Activated CD4-positive, alpha-beta memory T cell treated with anti-CD3 and anti-CD28 coated beads for 36 hours (primary cell): ENCODE measurements at regions of chr1 and their contacts with region 1.

Region 1: DNA sequence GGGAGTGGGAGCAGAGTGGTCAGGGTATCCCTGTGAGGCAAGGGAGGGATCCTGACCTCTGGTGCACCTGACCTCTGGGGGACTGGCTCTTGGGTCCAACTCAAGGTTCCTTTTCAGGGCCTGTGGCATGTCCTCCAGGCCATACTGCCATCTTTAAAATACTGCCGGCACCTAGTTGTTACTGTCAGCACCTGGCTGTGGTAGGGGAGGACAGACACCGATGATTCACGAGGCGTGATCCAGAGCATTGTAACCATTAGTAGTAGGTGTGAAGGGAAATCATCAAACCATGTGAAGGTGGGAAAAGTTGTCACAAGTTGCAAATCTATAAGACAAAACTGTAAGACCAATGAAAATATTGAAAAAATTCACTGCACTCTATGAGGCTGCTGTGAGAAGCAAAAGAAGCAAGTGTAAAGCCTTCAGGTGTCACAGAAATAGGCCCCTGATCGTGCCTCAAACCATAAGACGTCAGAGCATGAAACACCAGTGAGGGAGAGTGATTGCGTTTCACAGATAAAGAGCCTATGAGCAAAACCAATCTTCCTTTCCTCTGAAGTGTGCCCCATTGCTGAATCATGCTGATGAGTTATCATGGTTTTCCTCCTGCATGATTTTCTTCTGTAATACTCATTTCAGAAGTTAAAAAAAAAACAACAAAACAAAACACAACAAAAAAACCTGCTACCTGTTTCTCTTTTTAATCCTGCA is 55.3 kb downstream of the CDC7 start:
- DNase-seq: peak; percentile 79
- H3K4me3 Mint-ChIP-seq: peak overlapping the region; percentile 51
- H3K27ac Mint-ChIP-seq: peak overlapping the region; percentile 91
- H3K4me1 Mint-ChIP-seq: peaks cover 87% of the 10 kb centered on the region
- H3K27me3 Mint-ChIP-seq: no peaks in the 10 kb centered on the region

Region 2: GRCh38 chr1:91500756-91501522 is 55.0 kb before region 1 on chr1 and contains the start of gene CDC7:
- CTCF ChIA-PET with region 1: interaction called, 5 read pairs
- POLR2A ChIA-PET with region 1: no interaction called
- intact Hi-C with region 1: loop called (anchors 2 kb)
- DNase-seq: peak; percentile 88
- H3K4me3 Mint-ChIP-seq: no peak within 1 kb of the TSS
- H3K27ac Mint-ChIP-seq: no peak within 1 kb of the TSS
- H3K4me1 Mint-ChIP-seq: peaks cover 16% of the 10 kb centered on the region
- H3K27me3 Mint-ChIP-seq: no peaks in the 10 kb centered on the region
- total RNA-seq, gene CDC7: 20.2 to 20.4 TPM

Region 3: DNA sequence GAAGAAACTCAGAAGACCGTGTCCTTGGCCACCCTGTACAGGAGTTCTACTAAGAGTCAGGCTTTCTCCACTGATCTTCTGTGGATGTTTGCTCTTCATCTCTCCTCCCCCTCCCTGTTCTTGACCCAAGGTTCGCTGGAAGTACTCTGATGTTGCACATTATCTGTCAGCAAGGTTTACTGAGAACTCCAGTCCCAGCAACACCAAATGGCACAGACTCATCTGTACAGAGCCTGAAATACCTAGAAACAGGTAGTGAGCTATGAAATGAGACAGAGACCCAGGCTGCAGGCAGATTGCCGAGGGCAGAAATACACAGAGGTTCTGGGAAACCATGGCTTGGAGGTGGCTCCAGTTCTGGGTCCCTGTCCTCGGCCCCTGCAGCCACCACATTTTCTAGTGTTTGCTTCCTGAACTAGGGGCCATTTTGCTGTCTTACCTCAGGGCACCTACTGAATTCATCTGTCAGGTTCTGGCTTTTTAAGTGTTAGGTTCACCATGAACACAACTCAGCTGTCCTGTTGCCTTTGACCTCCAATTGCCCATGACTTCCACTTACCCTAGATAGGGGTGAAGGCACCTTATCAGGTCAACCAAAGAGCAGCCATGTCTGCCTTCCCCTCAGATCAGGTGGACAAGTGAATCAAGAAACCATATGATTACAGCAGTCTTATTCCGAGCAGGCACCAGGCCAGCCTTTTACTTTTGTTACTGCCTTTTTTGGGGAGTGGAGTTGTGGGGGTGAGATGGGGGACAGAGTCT is 36.9 kb after region 1 on chr1:
- CTCF ChIA-PET with region 1: no interaction called
- POLR2A ChIA-PET with region 1: no interaction called
- intact Hi-C with region 1: loop called (anchors 2 kb)
- DNase-seq: peak; percentile 21
- H3K4me3 Mint-ChIP-seq: peak overlapping the region; percentile 52
- H3K27ac Mint-ChIP-seq: peak overlapping the region; percentile 79
- H3K4me1 Mint-ChIP-seq: peaks cover 30% of the 10 kb centered on the region
- H3K27me3 Mint-ChIP-seq: no peaks in the 10 kb centered on the region

Region 4: DNA sequence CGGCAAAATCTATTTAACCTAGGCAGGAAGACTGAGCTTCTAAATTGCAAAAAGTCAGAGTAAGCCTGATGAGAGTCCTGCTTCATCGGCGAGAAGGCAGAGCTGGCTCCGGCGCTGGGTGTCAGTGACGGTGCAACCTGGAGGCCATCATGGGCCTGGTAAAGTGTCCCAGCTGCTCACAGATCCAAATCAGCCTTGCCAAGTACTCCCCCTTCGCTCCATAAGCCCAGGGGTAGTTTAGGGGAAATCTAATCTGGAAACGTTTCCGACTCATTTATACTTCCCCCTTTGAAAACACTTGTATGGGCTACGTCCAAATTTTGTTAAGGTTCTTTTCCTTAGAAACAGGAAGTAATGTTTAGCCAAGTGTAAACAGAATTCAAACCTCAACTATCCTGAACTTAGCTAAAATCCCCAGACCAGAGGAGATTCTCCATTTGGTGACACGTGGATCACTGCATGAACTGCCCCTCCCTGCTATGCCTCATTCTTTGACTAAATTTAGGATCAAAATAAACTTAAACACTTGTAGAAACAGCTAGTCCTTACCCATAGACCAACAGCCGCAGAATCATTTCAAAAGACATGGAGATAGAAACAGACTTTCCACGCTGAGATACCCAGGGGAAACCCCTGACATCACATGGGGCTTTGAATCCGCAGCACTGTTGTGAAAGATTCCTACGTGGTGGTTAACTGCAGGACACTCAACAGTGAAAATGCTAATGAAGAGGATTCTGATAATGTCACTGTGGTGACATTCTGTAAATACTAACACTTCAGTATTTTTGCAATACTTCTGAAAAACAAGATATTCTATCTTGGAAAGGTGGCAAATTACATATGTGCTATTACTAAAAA is 157.2 kb after region 1 on chr1:
- CTCF ChIA-PET with region 1: no interaction called
- POLR2A ChIA-PET with region 1: no interaction called
- intact Hi-C with region 1: loop called (anchors 1 kb)
- DNase-seq: peak; percentile 77
- H3K4me3 Mint-ChIP-seq: peak overlapping the region; percentile 24
- H3K27ac Mint-ChIP-seq: peak overlapping the region; percentile 71
- H3K4me1 Mint-ChIP-seq: peaks cover 25% of the 10 kb centered on the region
- H3K27me3 Mint-ChIP-seq: no peaks in the 10 kb centered on the region

Region 5: GRCh38 chr1:91754348-91754747 is 198.4 kb after region 1 on chr1:
- CTCF ChIA-PET with region 1: no interaction called
- POLR2A ChIA-PET with region 1: no interaction called
- intact Hi-C with region 1: loop called (anchors 1 kb)
- DNase-seq: peak; percentile 77
- H3K4me3 Mint-ChIP-seq: peak overlapping the region; percentile 2
- H3K27ac Mint-ChIP-seq: peak overlapping the region; percentile 67
- H3K4me1 Mint-ChIP-seq: peaks cover 38% of the 10 kb centered on the region
- H3K27me3 Mint-ChIP-seq: peaks cover 1% of the 10 kb centered on the region

Region 6: GRCh38 chr1:92476071-92476631 is 920.2 kb after region 1 on chr1:
- CTCF ChIA-PET with region 1: no interaction called
- POLR2A ChIA-PET with region 1: no interaction called
- intact Hi-C with region 1: loop called (anchors 10 kb)
- DNase-seq: peak; percentile 85
- H3K4me3 Mint-ChIP-seq: peak overlapping the region; percentile 54
- H3K27ac Mint-ChIP-seq: peak overlapping the region; percentile 86
- H3K4me1 Mint-ChIP-seq: peaks cover 87% of the 10 kb centered on the region
- H3K27me3 Mint-ChIP-seq: no peaks in the 10 kb centered on the region

Region 7: GRCh38 chr1:92960395-92961130 is 1404.6 kb after region 1 on chr1:
- CTCF ChIA-PET with region 1: no interaction called
- POLR2A ChIA-PET with region 1: no interaction called
- intact Hi-C with region 1: loop called (anchors 5 kb)
- DNase-seq: peak; percentile 75
- H3K4me3 Mint-ChIP-seq: peak overlapping the region; percentile 88
- H3K27ac Mint-ChIP-seq: peak overlapping the region; percentile 96
- H3K4me1 Mint-ChIP-seq: peaks cover 39% of the 10 kb centered on the region
- H3K27me3 Mint-ChIP-seq: no peaks in the 10 kb centered on the region